A549 (cell line): ENCODE measurements at regions of chr12 and their contacts with region 1.

Region 1: GRCh38 chr12:4296749-4297148 is 23.2 kb downstream of the CCND2 start:
- DNase-seq: no peak
- ATAC-seq: no peak
- H3K4me3 ChIP-seq: no peak overlapping the region
- H3K27ac ChIP-seq: no peak overlapping the region
- H3K4me1 ChIP-seq: no peaks in the 10 kb centered on the region
- CTCF ChIP-seq: no peak
- EP300 ChIP-seq: no peak
- POLR2A ChIP-seq: no peak
- RAD21 ChIP-seq: no peak

Region 2: DNA sequence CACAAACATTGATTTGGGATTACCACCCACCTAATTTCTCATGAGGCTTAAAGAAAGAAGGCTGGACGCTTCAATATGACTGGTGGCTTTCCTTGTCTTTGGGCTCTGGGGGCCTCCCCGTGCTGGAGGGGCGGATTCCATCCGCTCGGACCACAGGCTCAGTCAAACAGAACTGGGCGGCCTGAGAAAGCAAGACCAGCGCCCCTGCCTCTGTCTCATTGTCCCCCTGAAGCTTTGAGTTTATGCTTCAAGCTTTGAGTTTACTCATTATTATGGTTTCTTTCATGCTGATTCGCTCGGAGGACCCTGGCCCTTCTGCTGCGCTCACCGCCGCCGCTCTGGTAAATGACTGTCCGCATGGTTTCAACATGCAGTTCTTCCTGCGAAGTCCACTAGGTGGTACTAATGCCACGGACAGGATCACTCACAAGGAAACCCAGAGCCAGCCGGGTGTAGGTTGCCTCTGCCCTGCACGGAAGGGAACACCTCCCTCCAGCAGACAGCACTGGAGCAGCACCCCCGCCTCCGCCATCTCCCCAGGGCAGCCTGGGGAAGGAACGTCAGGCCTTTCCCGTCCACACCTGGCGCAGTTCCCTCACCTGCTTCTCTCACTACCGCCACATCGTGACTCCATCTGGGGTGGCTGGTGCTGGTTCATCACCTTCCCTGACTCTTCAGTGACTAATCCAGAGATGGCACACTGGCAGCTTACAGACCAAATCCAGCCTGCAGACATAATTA is 11.0 kb after region 1 on chr12:
- CTCF ChIA-PET with region 1: interaction called, 17 read pairs
- POLR2A ChIA-PET with region 1: no interaction called
- DNase-seq: peak; percentile 87 to 93
- ATAC-seq: peak; percentile 97 to 99
- H3K4me3 ChIP-seq: no peak overlapping the region; the same call in 2 of the 3 replicates
- H3K27ac ChIP-seq: no peak overlapping the region
- H3K4me1 ChIP-seq: no peaks in the 10 kb centered on the region
- CTCF ChIP-seq: peak; percentile 72
- EP300 ChIP-seq: no peak
- POLR2A ChIP-seq: no peak
- RAD21 ChIP-seq: peak; percentile 84 to 90